Activated CD4-positive, alpha-beta T cell treated with anti-CD3 and anti-CD28 coated beads for 36 hours (primary cell): ENCODE measurements at regions of chr13 and their contacts with region 1.

Region 1: DNA sequence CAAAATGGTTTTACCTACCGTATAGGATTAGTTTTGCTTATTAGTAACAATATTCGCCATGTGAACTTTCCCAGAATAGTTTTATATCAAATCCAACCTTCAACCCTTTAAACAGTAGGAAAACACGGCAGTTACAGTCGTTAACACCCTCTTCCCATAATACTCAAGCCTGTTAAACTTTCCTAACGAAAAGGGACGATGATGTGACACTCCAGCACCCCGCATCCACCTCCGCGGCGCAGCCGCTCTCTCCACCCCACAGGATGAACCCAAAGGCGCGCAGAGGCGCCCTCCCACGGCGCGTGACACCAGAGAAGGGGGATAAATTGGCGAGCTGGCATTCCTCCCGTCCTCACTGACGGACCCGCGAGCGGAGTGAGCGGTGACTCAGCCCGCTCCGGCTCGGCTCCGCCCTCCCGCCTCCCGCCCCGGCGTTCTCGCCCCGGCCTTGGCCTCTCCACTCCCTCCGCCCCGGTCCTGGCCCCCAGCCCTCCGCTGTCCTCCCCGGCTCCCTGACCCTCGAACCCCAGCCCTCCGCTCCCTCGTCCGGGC is 665 bp downstream of the TUBGCP3 start:
- DNase-seq: peak; percentile 84
- ATAC-seq: peak; percentile 79
- H3K4me3 Mint-ChIP-seq: peak overlapping the region; percentile 96
- H3K27ac Mint-ChIP-seq: peak overlapping the region; percentile 97
- H3K4me1 Mint-ChIP-seq: peaks cover 46% of the 10 kb centered on the region
- H3K27me3 Mint-ChIP-seq: no peaks in the 10 kb centered on the region

Region 2: DNA sequence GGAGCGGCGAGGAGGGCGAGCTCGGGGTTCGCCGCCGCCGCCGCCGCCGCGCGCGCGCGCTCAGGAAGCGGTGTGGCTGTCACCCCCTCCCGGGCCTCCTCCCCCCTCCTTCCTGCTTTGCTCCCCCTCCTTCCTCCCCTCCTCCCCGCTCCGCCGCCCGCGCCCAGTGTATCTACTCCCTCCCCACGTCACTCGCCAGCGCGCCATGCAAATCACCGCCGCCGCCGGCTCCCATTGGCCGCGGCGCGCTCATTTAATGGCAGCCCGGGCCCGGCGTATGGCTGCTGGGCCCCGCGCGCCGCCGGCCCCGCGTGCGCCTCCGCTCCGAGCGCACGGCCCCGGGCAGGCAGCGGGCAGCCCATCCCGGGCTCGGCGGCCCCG is 520.7 kb before region 1 on chr13:
- CTCF ChIA-PET with region 1: no interaction called
- POLR2A ChIA-PET with region 1: no interaction called
- intact Hi-C with region 1: loop called in 1 of 2 experiments (anchors 2 kb)
- DNase-seq: peak; percentile 87
- ATAC-seq: peak; percentile 85
- H3K4me3 Mint-ChIP-seq: no peak overlapping the region
- H3K27ac Mint-ChIP-seq: no peak overlapping the region
- H3K4me1 Mint-ChIP-seq: peaks cover 11% of the 10 kb centered on the region
- H3K27me3 Mint-ChIP-seq: peaks cover 63% of the 10 kb centered on the region

Region 3: DNA sequence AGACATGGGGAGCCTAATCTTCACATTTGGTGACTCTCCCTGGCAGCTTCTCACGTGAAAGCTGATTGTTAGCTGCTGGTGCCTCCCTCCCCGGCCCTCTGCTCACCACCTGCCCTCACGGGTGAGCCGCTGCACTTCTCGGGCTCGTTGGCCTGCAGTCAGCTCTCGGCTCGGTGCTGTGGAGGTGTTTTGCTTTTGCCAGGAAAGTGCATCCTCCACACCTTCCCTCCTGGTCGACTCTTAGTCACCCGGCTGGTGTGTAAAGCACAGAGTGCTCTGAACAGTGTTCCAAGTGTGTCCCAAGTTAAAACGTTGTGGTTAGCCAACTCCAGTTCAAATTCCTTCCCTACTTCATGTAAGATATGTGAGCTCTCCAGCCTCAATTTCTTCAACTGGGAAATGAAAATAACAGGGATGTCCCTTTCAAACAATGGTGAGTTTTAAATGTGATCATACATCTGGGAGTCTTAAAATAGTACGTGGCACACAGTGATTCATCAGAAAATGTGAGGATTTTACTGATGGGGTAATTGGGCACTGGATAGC is 157.3 kb after region 1 on chr13:
- CTCF ChIA-PET with region 1: no interaction called
- POLR2A ChIA-PET with region 1: no interaction called
- intact Hi-C with region 1: no loop called
- DNase-seq: no peak
- ATAC-seq: no peak
- H3K4me3 Mint-ChIP-seq: no peak overlapping the region
- H3K27ac Mint-ChIP-seq: no peak overlapping the region
- H3K4me1 Mint-ChIP-seq: peaks cover 31% of the 10 kb centered on the region
- H3K27me3 Mint-ChIP-seq: no peaks in the 10 kb centered on the region